Colonic mucosa (tissue), 4 donors: ENCODE measurements at regions of chr18 and their contacts with region 1.

Region 1: DNA sequence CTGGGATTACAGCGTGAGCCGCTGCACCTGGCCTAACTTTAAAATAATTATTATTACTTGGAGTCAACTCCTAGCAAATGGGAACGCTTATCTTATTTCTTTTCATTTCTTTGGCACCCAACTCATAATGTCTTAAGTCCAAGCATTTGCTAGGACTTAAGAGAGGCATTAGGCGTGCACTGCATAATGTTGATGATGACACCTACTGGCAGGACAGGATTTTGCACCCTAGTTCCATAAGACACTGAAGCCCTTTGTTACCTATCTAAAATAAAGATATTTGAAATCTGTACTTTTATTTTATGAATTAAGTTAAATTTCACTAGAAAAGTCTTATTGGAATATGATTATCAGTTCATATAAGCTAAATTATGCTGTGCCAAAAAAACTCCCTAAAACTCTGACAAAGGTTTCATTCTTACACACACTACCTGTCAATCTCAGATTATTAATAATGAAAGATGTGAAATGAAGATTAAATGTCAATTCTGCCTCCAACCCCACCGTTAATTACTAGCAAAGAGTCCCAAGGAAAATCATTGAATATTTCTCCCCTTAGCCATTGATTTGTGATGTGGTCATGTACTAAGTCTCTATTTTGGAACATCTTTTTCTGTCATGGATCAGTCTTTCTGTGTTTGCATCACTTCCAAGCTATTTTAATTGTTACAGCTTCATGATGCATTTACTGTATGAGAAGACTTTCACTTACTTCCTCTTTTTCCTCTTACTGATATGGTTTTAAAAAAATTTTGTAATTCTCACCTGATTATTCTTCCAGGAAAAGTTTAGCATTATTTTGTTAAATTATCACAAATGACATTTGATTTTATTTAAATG is 12.7 kb upstream of the CDH2 start:
- DNase-seq: peak; percentile 31
- H3K4me3 ChIP-seq: no peak overlapping the region
- H3K27ac ChIP-seq: no peak overlapping the region
- H3K4me1 ChIP-seq: no peaks in the 10 kb centered on the region
- H3K27me3 ChIP-seq: no peaks in the 10 kb centered on the region
- CTCF ChIP-seq: peak; percentile 58

Region 2: DNA sequence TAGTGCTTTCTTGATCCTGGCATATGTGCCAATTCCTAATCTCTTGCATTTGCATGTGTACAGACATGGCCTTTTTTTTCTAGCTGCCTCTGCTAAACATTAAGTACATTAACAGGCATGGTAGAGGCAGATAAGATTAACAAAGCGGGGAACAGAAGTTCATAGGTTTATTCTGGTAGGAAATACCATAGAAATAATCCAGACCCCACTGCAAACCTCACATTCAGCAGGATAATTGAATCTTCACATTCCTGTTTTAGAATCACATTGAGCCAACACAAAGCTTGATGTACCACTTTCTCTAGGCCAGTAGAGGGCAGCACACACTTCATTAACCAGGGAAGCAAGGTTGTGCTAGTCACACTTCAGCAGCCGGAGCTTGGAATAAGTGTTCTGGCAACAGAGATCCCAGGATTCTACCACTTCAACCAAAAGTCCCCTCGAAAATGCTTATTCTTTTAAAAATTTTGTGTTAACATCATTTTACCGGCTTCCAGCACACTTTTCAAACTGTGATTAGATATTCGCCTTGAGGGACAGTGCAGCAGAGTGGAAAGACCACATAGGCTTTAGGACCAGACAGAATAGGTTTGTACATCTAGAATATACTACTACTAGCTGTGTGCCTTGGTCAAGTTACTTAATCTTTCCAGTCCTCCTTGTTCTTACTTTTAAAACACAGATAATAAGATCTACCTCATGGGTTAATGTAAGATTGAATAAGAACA is 584.3 kb before region 1 on chr18:
- intact Hi-C with region 1: loop called (anchors 10 kb)
- DNase-seq: peak; percentile 59
- H3K4me3 ChIP-seq: no peak overlapping the region
- H3K27ac ChIP-seq: no peak overlapping the region
- H3K4me1 ChIP-seq: no peaks in the 10 kb centered on the region
- H3K27me3 ChIP-seq: no peaks in the 10 kb centered on the region
- CTCF ChIP-seq: peak; percentile 74

Region 3: DNA sequence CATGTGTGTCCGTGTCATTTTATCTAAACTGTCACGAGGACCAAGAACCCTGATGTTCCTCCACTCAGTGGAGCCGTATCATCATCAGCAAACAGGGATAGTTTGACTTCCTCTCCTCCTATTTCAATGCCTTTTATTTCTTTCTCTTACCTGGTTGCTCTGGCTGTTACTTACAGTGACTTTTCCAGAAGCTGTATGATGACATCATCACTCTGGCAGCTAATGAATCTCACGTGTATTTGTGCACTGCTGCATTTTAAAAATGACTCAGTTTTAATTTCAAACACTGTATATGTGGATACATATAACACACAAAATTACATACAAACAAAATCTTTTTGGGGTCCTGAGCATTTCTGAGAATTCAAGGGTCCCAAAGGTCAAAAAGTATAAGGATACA is 494.1 kb before region 1 on chr18:
- intact Hi-C with region 1: loop called (anchors 10 kb)
- DNase-seq: no peak
- H3K4me3 ChIP-seq: no peak overlapping the region
- H3K27ac ChIP-seq: no peak overlapping the region
- H3K4me1 ChIP-seq: no peaks in the 10 kb centered on the region
- H3K27me3 ChIP-seq: no peaks in the 10 kb centered on the region
- CTCF ChIP-seq: no peak